ENCODE measurements at regions of chr22 and their contacts with region 1.

Region 1: DNA sequence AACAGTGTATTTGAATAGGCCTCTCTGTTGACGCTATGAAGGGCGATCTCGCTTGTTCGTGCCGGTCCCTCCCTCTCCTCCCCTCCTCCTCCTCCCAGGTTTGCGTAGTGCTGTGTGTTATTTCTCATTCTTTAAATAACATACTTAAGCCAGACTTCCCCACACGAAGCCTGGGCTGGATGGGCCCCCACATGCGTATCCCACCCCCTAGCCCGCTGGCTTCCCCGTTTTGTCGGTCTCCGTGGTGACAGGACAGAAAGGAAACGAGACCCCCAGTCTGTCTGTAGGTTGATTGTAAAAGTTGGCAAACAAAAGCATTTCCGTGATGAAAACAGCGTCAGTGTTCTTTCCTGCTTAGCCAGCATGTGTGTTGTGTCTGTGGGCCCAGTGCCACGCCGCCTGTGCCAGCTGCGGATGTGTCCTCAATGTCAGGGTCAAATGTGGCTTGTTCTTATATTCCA is 27.3 kb downstream of the FAM118A start:
- DNase-seq: peak in 5 of 14 experiments; percentile 24 to 65 (median 55)
- ATAC-seq: peak; percentile 73
- H3K4me3 ChIP-seq: no peak overlapping the region
- H3K4me3 Mint-ChIP-seq: peak overlapping the region; percentile 71
- H3K27ac ChIP-seq: no peak overlapping the region
- H3K27ac Mint-ChIP-seq: peak overlapping the region; percentile 87
- H3K4me1 ChIP-seq: peaks cover 23% of the 10 kb centered on the region
- H3K4me1 Mint-ChIP-seq: peaks cover 34% of the 10 kb centered on the region
- H3K27me3 ChIP-seq: no peaks in the 10 kb centered on the region
- H3K27me3 Mint-ChIP-seq: no peaks in the 10 kb centered on the region
- CTCF ChIP-seq: no peak

Region 2: GRCh38 chr22:45429981-45430775 is 93.2 kb after region 1 on chr22:
- CTCF ChIA-PET with region 1: no interaction called
- POLR2A ChIA-PET with region 1: no interaction called
- intact Hi-C with region 1: loop called in 1 of 2 experiments (anchors 5 kb)
- DNase-seq: no peak
- ATAC-seq: no peak
- H3K4me3 ChIP-seq: no peak overlapping the region
- H3K4me3 Mint-ChIP-seq: no peak overlapping the region
- H3K27ac ChIP-seq: no peak overlapping the region
- H3K27ac Mint-ChIP-seq: no peak overlapping the region
- H3K4me1 ChIP-seq: peaks cover 1% of the 10 kb centered on the region
- H3K4me1 Mint-ChIP-seq: peaks cover under 1% of the 10 kb centered on the region
- H3K27me3 ChIP-seq: no peaks in the 10 kb centered on the region
- H3K27me3 Mint-ChIP-seq: no peaks in the 10 kb centered on the region
- CTCF ChIP-seq: no peak